ENCODE measurements at regions of chr6 and their contacts with region 1.

Region 1: GRCh38 chr6:129672881-129673643 is 36.9 kb downstream of the ARHGAP18 start:
- H3K4me3 Mint-ChIP-seq: peak overlapping the region; percentile 67
- H3K27ac Mint-ChIP-seq: peak overlapping the region; percentile 99
- H3K4me1 Mint-ChIP-seq: peaks cover 84% of the 10 kb centered on the region
- H3K27me3 Mint-ChIP-seq: no peaks in the 10 kb centered on the region

Region 2: DNA sequence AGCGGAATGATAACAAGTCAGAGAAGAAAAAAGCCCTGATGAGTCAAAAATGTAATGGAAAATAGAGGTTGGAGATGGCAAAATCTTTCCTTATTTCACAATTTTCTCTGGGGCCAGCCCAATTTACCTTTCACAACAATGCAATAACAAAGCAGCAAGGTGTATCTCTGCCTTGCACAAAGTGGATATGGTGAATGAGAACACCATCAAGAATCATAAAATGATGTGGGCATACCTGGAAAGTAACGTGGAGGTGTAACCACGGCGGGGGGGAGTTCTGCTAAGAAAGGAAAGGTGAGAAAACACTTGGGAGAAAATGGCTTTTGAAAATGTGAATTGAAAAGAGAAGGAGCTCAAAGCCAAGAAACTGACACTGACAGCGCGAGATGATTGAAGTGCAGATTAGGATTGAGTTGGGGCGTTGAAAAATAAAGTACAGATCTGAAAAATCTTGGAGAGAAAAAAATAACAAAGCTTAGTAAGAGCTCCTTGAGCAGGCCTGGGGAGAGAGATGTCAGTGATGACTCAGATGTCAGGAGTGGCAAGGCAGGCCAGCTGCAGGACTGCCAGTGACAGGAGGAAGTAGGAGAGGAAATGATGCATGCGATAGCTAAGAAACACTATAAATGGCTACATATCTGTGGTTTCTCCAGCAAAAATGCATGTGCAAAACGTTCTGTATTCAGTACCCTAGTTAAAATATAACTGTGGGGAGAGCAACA is 10.7 kb after region 1 on chr6:
- intact Hi-C with region 1: loop called (anchors 1 kb)
- H3K4me3 Mint-ChIP-seq: peak overlapping the region; percentile 58
- H3K27ac Mint-ChIP-seq: peak overlapping the region; percentile 91
- H3K4me1 Mint-ChIP-seq: peaks cover 82% of the 10 kb centered on the region
- H3K27me3 Mint-ChIP-seq: no peaks in the 10 kb centered on the region

Region 3: GRCh38 chr6:129709769-129710449 is 36.8 kb after region 1 on chr6 and contains the start of gene ARHGAP18:
- intact Hi-C with region 1: loop called (anchors 1 kb)
- H3K4me3 Mint-ChIP-seq: peak within 1 kb of the TSS; percentile 96
- H3K27ac Mint-ChIP-seq: peak within 1 kb of the TSS; percentile 87
- H3K4me1 Mint-ChIP-seq: peaks cover 39% of the 10 kb centered on the region
- H3K27me3 Mint-ChIP-seq: no peaks in the 10 kb centered on the region

Region 4: GRCh38 chr6:129730477-129731165 is 57.6 kb after region 1 on chr6:
- intact Hi-C with region 1: loop called (anchors 2 kb)
- H3K4me3 Mint-ChIP-seq: no peak overlapping the region
- H3K27ac Mint-ChIP-seq: peak overlapping the region; percentile 50
- H3K4me1 Mint-ChIP-seq: peaks cover 13% of the 10 kb centered on the region
- H3K27me3 Mint-ChIP-seq: no peaks in the 10 kb centered on the region

Region 5: GRCh38 chr6:129749749-129750120 is 76.7 kb after region 1 on chr6:
- intact Hi-C with region 1: loop called (anchors 1 kb)
- H3K4me3 Mint-ChIP-seq: no peak overlapping the region
- H3K27ac Mint-ChIP-seq: no peak overlapping the region
- H3K4me1 Mint-ChIP-seq: peaks cover 26% of the 10 kb centered on the region
- H3K27me3 Mint-ChIP-seq: no peaks in the 10 kb centered on the region